ENCODE measurements at regions of chr1 and their contacts with region 1.

Region 1: GRCh38 chr1:40161125-40161887 is at the start of gene RLF:
- DNase-seq: peak; percentile 72 to 97
- H3K4me3 ChIP-seq: peak within 1 kb of the TSS; percentile 84 to 94
- H3K27ac ChIP-seq: peak within 1 kb of the TSS; percentile 91 to 95
- H3K4me1 ChIP-seq: peaks cover 7 to 8% of the 10 kb centered on the region in 2 donors
- H3K27me3 ChIP-seq: no peaks in the 10 kb centered on the region
- CTCF ChIP-seq: peak in 1 of 3 experiments; percentile 16
- total RNA-seq, gene RLF: 7.1 TPM

Region 2: DNA sequence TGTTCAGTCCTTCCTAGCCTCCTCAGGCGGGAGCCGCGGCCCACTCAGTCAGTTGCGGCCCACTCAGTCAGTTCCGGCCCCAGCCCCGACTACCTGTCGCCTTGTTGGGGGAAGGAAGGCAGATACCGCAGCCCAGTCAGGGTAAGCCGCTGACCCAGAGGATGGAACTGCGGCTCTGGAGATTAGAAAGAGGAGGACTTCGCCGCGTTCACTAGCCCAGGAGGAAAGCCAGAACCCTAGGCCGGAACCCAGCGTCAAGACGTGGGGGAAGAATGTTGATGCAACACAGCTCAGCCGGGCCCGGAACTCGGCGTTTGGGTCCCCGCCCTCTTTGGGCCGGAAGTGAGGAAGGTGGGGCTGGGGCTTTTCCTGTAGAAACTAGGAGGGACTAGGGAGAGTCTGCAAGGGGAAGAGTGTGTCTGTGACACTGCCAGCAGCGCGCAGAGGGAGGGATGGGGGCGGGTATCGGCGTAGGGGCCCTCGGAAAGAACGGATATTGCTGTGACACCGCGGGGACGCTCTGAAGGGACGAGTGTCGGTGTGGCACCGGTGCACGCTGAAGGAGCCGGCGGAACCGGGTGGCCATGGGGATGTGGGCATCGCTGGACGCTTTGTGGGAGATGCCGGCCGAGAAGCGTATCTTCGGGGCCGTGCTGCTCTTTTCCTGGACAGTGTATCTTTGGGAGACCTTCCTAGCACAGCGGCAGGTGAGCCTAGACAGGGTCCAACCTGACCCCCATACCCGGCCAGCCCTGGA is 96.6 kb after region 1 on chr1 and contains the start of gene ZMPSTE24:
- intact Hi-C with region 1: loop called (anchors 1 kb)
- DNase-seq: peak; percentile 88 to 98
- H3K4me3 ChIP-seq: peak within 1 kb of the TSS; percentile 84
- H3K27ac ChIP-seq: peak within 1 kb of the TSS; percentile 90 to 98
- H3K4me1 ChIP-seq: peaks cover 8 to 34% of the 10 kb centered on the region in 2 donors
- H3K27me3 ChIP-seq: no peaks in the 10 kb centered on the region
- CTCF ChIP-seq: no peak
- total RNA-seq, gene ZMPSTE24: 61.8 TPM